Naive thymus-derived CD4-positive, alpha-beta T cell (primary cell): ENCODE measurements at regions of chr12 and their contacts with region 1.

Region 1: DNA sequence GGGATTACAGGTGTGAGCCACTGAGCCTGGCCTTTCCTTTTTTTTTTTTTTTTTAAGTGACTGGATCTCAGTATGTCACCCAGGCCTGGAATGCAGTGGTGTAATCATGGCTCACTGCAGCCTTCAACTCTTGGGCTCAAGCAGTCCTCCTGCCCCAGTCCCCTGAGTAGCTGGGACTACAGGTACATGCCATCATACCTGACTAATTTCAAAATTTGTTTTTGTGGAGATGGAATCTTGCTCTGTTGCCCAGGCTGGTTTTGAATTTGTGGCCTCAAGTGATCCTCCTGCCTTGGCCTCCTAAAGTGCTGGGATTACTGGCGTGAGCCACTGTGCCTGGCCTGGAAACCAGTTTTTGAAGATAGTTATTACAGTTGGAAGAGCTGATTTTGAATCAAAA is 37.4 kb downstream of the ETNK1 start:
- DNase-seq: no peak
- ATAC-seq: no peak
- H3K4me3 ChIP-seq: no peak overlapping the region
- H3K4me3 Mint-ChIP-seq: no peak overlapping the region
- H3K27ac ChIP-seq: no peak overlapping the region
- H3K27ac Mint-ChIP-seq: no peak overlapping the region
- H3K4me1 ChIP-seq: no peaks in the 10 kb centered on the region
- H3K4me1 Mint-ChIP-seq: peaks cover 0 to 22% (median 11%) of the 10 kb centered on the region in 7 donors
- H3K27me3 ChIP-seq: no peaks in the 10 kb centered on the region
- H3K27me3 Mint-ChIP-seq: no peaks in the 10 kb centered on the region

Region 2: DNA sequence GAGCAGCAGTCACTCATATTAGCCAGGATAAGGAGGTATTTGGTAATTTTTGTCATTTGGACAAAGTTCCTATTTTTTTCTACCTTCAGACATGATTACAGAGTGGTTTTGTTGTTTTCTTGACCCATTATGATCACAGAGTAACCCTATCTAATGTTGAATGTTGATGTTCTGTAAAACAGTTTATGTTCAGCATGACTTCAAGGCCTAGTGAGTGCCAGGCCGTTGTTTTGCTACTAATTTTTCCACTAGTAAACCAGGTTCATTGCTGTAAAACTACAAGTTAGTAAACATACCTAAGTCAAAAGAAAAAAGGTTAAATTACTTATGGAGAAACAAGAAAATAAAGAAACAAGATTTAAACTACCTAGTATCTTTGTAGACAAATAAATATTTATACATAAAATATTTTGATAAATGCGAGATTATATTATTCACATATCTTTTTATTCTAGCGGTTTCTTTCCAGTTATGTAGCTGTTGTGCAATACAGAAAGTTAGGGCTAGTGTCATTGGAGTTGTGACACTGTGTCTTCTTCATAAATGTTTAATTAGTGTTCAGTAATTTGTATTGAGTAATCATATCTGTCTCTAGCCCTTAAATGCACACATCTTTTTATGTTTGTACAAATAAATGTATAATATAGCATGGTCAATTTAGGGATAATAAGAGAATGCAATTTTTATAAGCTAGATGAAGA is 20.9 kb before region 1 on chr12:
- CTCF ChIA-PET with region 1: no interaction called
- POLR2A ChIA-PET with region 1: no interaction called
- intact Hi-C with region 1: loop called in 1 of 2 experiments (anchors 2 kb)
- DNase-seq: no peak
- ATAC-seq: no peak
- H3K4me3 ChIP-seq: no peak overlapping the region
- H3K4me3 Mint-ChIP-seq: peak overlapping the region in 3 of 10 donors; percentile 7 to 33 (median 16)
- H3K27ac ChIP-seq: no peak overlapping the region
- H3K27ac Mint-ChIP-seq: no peak overlapping the region
- H3K4me1 ChIP-seq: no peaks in the 10 kb centered on the region
- H3K4me1 Mint-ChIP-seq: peaks cover 14 to 66% (median 59%) of the 10 kb centered on the region in 7 donors
- H3K27me3 ChIP-seq: no peaks in the 10 kb centered on the region
- H3K27me3 Mint-ChIP-seq: no peaks in the 10 kb centered on the region

Region 3: DNA sequence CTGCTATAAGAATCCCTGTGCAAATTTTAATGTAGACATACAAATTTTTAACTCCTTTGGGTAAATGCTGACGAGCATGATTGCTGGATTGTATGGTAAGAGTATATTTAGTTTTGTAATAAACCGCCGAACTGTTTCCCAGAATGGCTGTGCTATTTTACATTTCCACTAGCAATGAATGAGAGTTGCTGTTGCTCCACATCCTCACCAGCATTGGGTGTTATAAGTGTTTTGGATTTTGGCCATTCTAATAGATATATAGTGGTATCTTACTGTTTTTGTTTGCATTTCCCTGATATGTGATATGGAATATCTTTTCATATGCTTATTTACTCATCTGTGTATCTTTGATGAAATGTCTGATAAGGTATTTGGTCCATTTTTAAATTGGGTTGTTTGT is 13.7 kb before region 1 on chr12:
- CTCF ChIA-PET with region 1: interaction called, 3 read pairs
- POLR2A ChIA-PET with region 1: no interaction called
- intact Hi-C with region 1: loop called (anchors 2 kb)
- DNase-seq: no peak
- ATAC-seq: no peak
- H3K4me3 ChIP-seq: no peak overlapping the region
- H3K4me3 Mint-ChIP-seq: no peak overlapping the region
- H3K27ac ChIP-seq: no peak overlapping the region
- H3K27ac Mint-ChIP-seq: no peak overlapping the region
- H3K4me1 ChIP-seq: no peaks in the 10 kb centered on the region
- H3K4me1 Mint-ChIP-seq: peaks cover 5 to 66% (median 50%) of the 10 kb centered on the region in 7 donors
- H3K27me3 ChIP-seq: no peaks in the 10 kb centered on the region
- H3K27me3 Mint-ChIP-seq: no peaks in the 10 kb centered on the region

Region 4: GRCh38 chr12:24039113-24039525 is 1376.8 kb after region 1 on chr12:
- CTCF ChIA-PET with region 1: no interaction called
- POLR2A ChIA-PET with region 1: no interaction called
- intact Hi-C with region 1: no loop called
- DNase-seq: no peak
- ATAC-seq: no peak
- H3K4me3 ChIP-seq: no peak overlapping the region
- H3K4me3 Mint-ChIP-seq: no peak overlapping the region
- H3K27ac ChIP-seq: no peak overlapping the region
- H3K27ac Mint-ChIP-seq: no peak overlapping the region
- H3K4me1 ChIP-seq: no peaks in the 10 kb centered on the region
- H3K4me1 Mint-ChIP-seq: no peaks in the 10 kb centered on the region
- H3K27me3 ChIP-seq: no peaks in the 10 kb centered on the region
- H3K27me3 Mint-ChIP-seq: no peaks in the 10 kb centered on the region